CD8-positive, alpha-beta memory T cell (primary cell): ENCODE measurements at regions of chr1 and their contacts with region 1.

Region 1: GRCh38 chr1:200979574-200980451 is 43.7 kb downstream of the KIF21B start:
- DNase-seq: peak; percentile 36 to 75 (median 50)
- H3K4me3 ChIP-seq: no peak overlapping the region
- H3K4me3 Mint-ChIP-seq: no peak overlapping the region
- H3K27ac ChIP-seq: no peak overlapping the region
- H3K27ac Mint-ChIP-seq: peak overlapping the region in 3 of 8 donors; percentile 6 to 58 (median 54)
- H3K4me1 ChIP-seq: no peaks in the 10 kb centered on the region
- H3K4me1 Mint-ChIP-seq: no peaks in the 10 kb centered on the region
- H3K27me3 ChIP-seq: no peaks in the 10 kb centered on the region
- H3K27me3 Mint-ChIP-seq: no peaks in the 10 kb centered on the region

Region 2: DNA sequence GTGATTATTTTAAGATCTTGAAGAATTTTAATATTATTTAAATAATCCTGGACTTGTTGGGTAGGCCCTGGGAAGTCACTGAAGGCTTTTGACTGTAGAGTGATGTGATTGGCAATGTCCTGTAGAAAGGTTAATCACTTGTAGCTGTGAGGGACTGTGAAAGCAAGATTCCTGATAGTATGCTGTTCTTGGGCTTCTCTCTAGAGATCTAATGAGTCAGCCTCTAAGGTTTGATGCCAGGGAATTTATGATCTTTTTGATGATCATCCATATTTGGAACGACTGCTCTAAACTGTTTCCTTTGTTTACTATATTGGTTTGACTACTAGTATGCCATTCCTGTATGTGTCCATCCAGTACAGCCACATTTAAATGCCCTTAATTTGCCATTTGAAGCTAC is 184.7 kb before region 1 on chr1:
- CTCF ChIA-PET with region 1: no interaction called
- POLR2A ChIA-PET with region 1: no interaction called
- DNase-seq: no peak
- H3K4me3 ChIP-seq: no peak overlapping the region
- H3K4me3 Mint-ChIP-seq: no peak overlapping the region
- H3K27ac ChIP-seq: no peak overlapping the region
- H3K27ac Mint-ChIP-seq: no peak overlapping the region
- H3K4me1 ChIP-seq: no peaks in the 10 kb centered on the region
- H3K4me1 Mint-ChIP-seq: no peaks in the 10 kb centered on the region
- H3K27me3 ChIP-seq: no peaks in the 10 kb centered on the region
- H3K27me3 Mint-ChIP-seq: peaks cover 5 to 6% of the 10 kb centered on the region in 2 donors

Region 3: DNA sequence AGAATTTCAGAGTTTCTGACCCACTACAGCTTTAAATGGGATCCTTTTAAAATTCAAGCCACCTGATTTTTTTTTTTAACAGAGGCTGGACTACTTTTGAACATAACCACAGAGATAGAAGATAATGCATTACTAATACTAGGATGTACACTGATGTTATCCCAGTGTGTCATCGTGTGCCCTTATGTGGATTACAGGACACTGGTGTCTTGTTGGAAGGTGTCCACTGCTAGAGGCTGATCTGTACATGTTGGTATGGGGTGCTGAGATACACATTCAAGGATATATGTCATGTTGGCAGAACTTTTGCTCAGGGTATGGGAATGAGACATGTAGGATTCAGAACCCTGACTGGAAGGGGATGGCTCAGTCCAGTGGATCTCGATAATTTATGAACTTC is 28.8 kb before region 1 on chr1:
- CTCF ChIA-PET with region 1: no interaction called
- POLR2A ChIA-PET with region 1: no interaction called
- DNase-seq: no peak
- H3K4me3 ChIP-seq: no peak overlapping the region
- H3K4me3 Mint-ChIP-seq: no peak overlapping the region
- H3K27ac ChIP-seq: no peak overlapping the region
- H3K27ac Mint-ChIP-seq: no peak overlapping the region
- H3K4me1 ChIP-seq: no peaks in the 10 kb centered on the region
- H3K4me1 Mint-ChIP-seq: no peaks in the 10 kb centered on the region
- H3K27me3 ChIP-seq: no peaks in the 10 kb centered on the region
- H3K27me3 Mint-ChIP-seq: peaks cover 4 to 26% of the 10 kb centered on the region in 2 donors

Region 4: DNA sequence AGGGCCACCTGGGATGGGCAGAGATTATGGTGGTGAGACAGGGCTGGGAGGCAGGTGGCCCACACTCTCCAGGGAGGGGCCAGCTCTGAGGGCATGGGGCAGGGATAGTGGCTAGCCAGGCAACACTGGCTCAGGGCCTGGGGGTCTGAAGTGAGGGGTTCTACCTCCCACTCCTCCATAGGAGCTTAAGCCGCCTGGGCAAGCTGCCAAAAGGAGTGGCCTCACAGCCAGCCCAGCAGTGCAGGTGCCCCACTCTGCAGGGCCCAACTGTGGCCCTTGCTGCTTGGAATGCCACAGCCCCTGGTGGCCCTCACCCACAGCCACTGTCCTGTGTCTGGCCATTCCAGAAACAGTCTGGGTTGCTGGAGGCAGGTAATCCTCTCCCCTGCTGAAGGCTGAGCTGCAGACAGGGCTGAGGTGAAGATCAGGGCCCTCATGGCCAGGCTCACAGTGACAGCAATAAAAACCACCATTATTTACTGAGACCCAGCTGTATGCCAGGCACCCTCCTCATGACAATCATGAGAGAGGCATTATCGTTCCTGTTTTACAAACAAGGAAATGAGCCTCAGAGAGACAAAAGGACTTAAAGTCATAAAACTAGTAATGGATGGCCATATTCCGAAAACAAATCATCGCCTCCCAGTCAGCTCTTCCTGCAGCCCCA is 12.7 kb after region 1 on chr1:
- CTCF ChIA-PET with region 1: interaction called, 23 read pairs
- POLR2A ChIA-PET with region 1: no interaction called
- DNase-seq: no peak
- H3K4me3 ChIP-seq: no peak overlapping the region
- H3K4me3 Mint-ChIP-seq: no peak overlapping the region
- H3K27ac ChIP-seq: no peak overlapping the region
- H3K27ac Mint-ChIP-seq: peak overlapping the region in 1 of 8 donors; percentile 36
- H3K4me1 ChIP-seq: no peaks in the 10 kb centered on the region
- H3K4me1 Mint-ChIP-seq: peaks cover 0 to 7% (median 3%) of the 10 kb centered on the region in 3 donors
- H3K27me3 ChIP-seq: no peaks in the 10 kb centered on the region
- H3K27me3 Mint-ChIP-seq: no peaks in the 10 kb centered on the region

Region 5: GRCh38 chr1:201023517-201023902 is 43.7 kb after region 1 on chr1 and contains the start of gene KIF21B:
- CTCF ChIA-PET with region 1: interaction called, 63 read pairs
- POLR2A ChIA-PET with region 1: interaction called, 14 read pairs
- DNase-seq: peak; percentile 88 to 94 (median 91)
- H3K4me3 ChIP-seq: peak within 1 kb of the TSS; percentile 92
- H3K4me3 Mint-ChIP-seq: peak within 1 kb of the TSS; percentile 92 to 99 (median 97)
- H3K27ac ChIP-seq: peak within 1 kb of the TSS; percentile 73
- H3K27ac Mint-ChIP-seq: peak within 1 kb of the TSS; percentile 90 to 100 (median 96)
- H3K4me1 ChIP-seq: peaks cover 59% of the 10 kb centered on the region
- H3K4me1 Mint-ChIP-seq: peaks cover 53 to 78% (median 60%) of the 10 kb centered on the region in 3 donors
- H3K27me3 ChIP-seq: no peaks in the 10 kb centered on the region
- H3K27me3 Mint-ChIP-seq: peaks cover 0 to 2% of the 10 kb centered on the region in 2 donors
- total RNA-seq, gene KIF21B: 37.5 to 37.6 TPM

Region 6: DNA sequence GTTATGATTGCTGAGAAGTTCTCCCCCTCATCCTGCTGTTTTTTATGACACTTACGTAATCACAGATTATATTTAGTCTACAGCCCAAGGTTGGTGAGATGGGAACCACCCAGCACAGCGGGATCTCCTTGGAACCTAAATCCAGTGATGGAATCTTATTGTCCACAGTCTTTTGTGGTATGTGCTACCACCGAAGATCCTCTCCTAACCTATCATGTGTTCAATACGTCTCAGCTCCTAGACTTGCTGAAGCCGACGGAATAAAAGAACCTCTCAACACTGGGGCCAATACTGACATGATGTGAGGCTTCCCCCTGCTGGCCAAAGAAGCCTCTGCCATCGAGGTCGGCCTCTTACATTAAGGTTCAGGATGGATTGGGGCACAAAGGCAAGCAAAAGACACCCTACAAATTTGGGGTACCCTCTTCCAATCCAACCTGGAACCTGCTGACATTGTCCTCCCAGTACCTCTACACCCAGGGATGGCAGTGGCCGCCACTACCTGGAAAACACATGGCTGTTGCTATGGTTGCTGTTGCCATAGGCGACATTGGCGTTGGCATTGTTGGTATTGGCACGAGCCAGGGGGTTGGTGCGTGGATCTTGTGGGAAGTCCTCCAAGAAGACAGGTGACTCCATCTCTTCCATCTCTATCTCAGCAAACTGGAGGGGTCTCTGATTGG is 63.1 kb after region 1 on chr1:
- CTCF ChIA-PET with region 1: interaction called, 27 read pairs
- POLR2A ChIA-PET with region 1: no interaction called
- DNase-seq: peak; percentile 48 to 79 (median 58)
- H3K4me3 ChIP-seq: no peak overlapping the region
- H3K4me3 Mint-ChIP-seq: no peak overlapping the region
- H3K27ac ChIP-seq: no peak overlapping the region
- H3K27ac Mint-ChIP-seq: peak overlapping the region in 2 of 8 donors; percentile 29 to 51
- H3K4me1 ChIP-seq: no peaks in the 10 kb centered on the region
- H3K4me1 Mint-ChIP-seq: peaks cover 3 to 5% (median 4%) of the 10 kb centered on the region in 3 donors
- H3K27me3 ChIP-seq: no peaks in the 10 kb centered on the region
- H3K27me3 Mint-ChIP-seq: peaks cover 0 to 2% of the 10 kb centered on the region in 2 donors

Region 7: DNA sequence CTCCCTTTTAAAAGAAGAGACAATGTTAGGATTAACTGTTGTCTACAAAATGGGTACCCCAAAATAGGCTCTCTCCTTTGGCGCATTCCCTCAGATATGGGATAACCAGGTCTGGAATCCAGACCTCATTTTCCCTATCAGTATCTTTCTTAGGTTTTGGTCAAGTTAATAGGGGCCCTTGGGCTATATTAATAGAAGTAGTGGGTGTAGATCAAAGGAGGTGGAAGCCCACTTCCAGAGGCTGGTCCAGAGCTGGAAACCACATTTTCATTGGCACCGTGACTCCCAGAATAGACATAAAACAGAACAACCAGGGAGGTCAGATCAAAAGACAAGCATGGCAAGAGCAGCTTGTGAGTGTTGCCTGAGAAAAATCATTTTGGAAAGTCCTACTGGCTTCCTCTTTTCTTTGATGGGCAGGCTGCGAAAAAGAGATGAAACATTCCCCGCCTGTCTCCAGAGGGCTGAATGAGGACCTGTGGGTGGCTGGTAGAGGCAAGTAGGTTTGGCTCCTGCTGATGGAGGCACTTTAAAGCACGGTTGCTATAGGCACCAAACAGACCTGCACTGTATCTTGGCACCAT is 69.5 kb after region 1 on chr1:
- CTCF ChIA-PET with region 1: interaction called, 12 read pairs
- POLR2A ChIA-PET with region 1: no interaction called
- DNase-seq: no peak
- H3K4me3 ChIP-seq: no peak overlapping the region
- H3K4me3 Mint-ChIP-seq: no peak overlapping the region
- H3K27ac ChIP-seq: no peak overlapping the region
- H3K27ac Mint-ChIP-seq: no peak overlapping the region
- H3K4me1 ChIP-seq: no peaks in the 10 kb centered on the region
- H3K4me1 Mint-ChIP-seq: peaks cover 0 to 9% (median 8%) of the 10 kb centered on the region in 3 donors
- H3K27me3 ChIP-seq: no peaks in the 10 kb centered on the region
- H3K27me3 Mint-ChIP-seq: no peaks in the 10 kb centered on the region

Region 8: DNA sequence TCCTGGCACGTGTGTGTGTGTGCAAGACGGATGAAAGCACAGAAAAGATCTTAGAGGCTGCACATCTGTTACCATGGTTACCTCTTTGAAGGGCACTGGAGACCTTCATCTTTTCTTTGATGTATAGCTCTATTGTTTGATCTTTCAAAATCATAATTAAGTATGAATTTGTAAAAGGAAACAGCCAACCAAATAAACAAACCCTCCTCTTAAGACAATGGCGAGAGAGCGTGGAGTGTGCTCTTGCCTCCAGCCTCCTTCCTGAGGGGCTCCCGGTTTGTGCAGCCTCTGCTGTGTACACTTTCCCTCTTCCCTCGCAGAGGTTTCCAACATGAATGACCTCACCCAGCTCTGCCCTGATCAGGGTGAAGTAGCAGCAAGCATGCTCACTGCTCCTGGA is 104.5 kb after region 1 on chr1:
- CTCF ChIA-PET with region 1: no interaction called
- POLR2A ChIA-PET with region 1: no interaction called
- DNase-seq: no peak
- H3K4me3 ChIP-seq: no peak overlapping the region
- H3K4me3 Mint-ChIP-seq: no peak overlapping the region
- H3K27ac ChIP-seq: no peak overlapping the region
- H3K27ac Mint-ChIP-seq: peak overlapping the region in 1 of 8 donors; percentile 69
- H3K4me1 ChIP-seq: no peaks in the 10 kb centered on the region
- H3K4me1 Mint-ChIP-seq: no peaks in the 10 kb centered on the region
- H3K27me3 ChIP-seq: peaks cover 4% of the 10 kb centered on the region
- H3K27me3 Mint-ChIP-seq: peaks cover 8 to 29% of the 10 kb centered on the region in 2 donors